ENCODE measurements at regions of chr14 and their contacts with region 1.

Region 1: DNA sequence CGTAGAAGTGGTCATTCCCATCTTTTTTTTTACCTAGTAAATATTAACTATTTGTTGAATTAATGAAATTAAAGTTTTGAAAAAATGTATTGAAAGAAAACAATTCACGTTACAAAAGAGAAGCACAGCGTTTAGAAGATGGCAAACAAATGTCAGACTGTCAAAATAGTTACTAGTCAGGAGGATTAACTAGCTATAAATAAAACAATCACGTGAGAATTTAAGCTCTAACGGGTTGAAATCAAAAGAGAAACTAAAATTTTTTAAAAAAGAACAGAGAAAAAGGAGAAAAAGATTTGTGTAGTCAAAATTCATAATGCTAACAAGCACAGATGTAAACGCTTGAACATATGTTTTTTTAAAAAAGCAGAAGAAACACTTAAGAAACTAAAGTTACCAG is 26.4 kb downstream of the DDHD1 start:
- DNase-seq: no peak
- ATAC-seq: peak; percentile 32
- H3K4me3 Mint-ChIP-seq: peak overlapping the region; percentile 70
- H3K27ac Mint-ChIP-seq: peak overlapping the region; percentile 85
- H3K4me1 Mint-ChIP-seq: peaks cover 5% of the 10 kb centered on the region
- H3K27me3 Mint-ChIP-seq: no peaks in the 10 kb centered on the region

Region 2: GRCh38 chr14:53109105-53110041 is 17.4 kb before region 1 on chr14:
- CTCF ChIA-PET with region 1: interaction called, 15 read pairs
- POLR2A ChIA-PET with region 1: interaction called, 4 read pairs
- DNase-seq: peak; percentile 86
- ATAC-seq: peak; percentile 89
- H3K4me3 Mint-ChIP-seq: no peak overlapping the region
- H3K27ac Mint-ChIP-seq: no peak overlapping the region
- H3K4me1 Mint-ChIP-seq: peaks cover 36% of the 10 kb centered on the region
- H3K27me3 Mint-ChIP-seq: no peaks in the 10 kb centered on the region

Measured in activated CD8-positive, alpha-beta T cell treated with anti-CD3 and anti-CD28 coated beads, Interleukin-2, amount 10 ng/mL, durations not matched to agents 7 days and 5 days (primary cell).